ENCODE measurements at regions of chr20 and their contacts with region 1.

Region 1: DNA sequence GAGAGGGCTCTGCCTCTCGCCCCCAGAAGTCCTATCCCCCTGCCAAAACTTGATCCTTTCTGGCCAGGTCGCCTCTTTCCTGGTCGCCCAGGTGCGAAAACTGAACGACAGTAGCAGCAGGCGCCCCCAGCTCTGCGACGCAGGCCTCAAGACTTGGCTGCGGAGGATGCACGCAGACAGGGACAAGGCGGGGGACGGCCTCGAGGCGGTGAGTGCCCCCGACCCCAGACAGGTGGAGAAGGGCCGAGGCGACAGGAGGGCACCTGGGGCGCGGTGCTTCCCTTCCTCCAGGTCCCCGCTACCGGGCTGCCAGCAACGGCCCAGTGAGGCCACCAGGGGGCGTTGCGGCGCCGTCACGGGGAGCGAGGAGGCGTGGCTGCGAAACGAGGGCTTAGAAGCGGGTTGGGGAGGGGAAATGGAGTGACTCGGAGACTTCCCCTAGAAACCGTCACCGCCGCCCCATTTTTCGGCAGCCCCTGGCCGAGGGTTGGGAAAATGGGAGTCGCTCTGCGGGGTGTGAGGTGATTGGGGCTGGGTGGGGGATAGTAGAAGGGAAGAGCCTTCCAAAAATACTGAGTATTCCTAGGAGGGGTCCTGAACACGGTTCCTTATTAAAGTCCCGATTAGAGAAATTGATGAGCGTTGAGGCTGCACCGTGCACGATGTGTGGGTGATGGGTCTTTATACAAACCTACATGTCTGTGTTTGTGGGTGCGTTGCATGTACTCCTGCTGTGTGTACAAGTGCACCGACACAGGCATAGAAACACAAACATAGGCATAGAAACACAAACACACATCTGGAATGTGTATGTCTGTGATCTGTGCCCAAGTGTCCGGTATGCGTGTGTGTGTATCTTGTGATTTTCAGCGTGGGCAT is 44.6 kb downstream of the ARHGAP40 start:
- DNase-seq: peak; percentile 67 to 89 (median 71)
- ATAC-seq: peak in 3 of 4 donors; percentile 77 to 91 (median 86)
- H3K4me3 ChIP-seq: peak overlapping the region in 5 of 12 donors; percentile 5 to 28 (median 20)
- H3K27ac ChIP-seq: no peak overlapping the region
- H3K4me1 ChIP-seq: peaks cover 0 to 10% (median 3%) of the 10 kb centered on the region in 12 donors
- H3K27me3 ChIP-seq: peaks cover 8 to 75% (median 39%) of the 10 kb centered on the region in 9 donors
- CTCF ChIP-seq: peak; percentile 89 to 97 (median 93)
- POLR2A ChIP-seq: no peak

Region 2: GRCh38 chr20:38730989-38731737 is 84.9 kb after region 1 on chr20:
- intact Hi-C with region 1: loop called (anchors 2 to 5 kb)
- DNase-seq: peak; percentile 44 to 85 (median 63)
- ATAC-seq: peak; percentile 66 to 89 (median 79)
- H3K4me3 ChIP-seq: peak overlapping the region in 8 of 12 donors; percentile 19 to 46 (median 32)
- H3K27ac ChIP-seq: no peak overlapping the region
- H3K4me1 ChIP-seq: peaks cover 0 to 49% (median 16%) of the 10 kb centered on the region in 12 donors
- H3K27me3 ChIP-seq: peaks cover 66 to 100% (median 86%) of the 10 kb centered on the region in 9 donors
- CTCF ChIP-seq: peak; percentile 89 to 99 (median 96)
- POLR2A ChIP-seq: no peak

Region 3: DNA sequence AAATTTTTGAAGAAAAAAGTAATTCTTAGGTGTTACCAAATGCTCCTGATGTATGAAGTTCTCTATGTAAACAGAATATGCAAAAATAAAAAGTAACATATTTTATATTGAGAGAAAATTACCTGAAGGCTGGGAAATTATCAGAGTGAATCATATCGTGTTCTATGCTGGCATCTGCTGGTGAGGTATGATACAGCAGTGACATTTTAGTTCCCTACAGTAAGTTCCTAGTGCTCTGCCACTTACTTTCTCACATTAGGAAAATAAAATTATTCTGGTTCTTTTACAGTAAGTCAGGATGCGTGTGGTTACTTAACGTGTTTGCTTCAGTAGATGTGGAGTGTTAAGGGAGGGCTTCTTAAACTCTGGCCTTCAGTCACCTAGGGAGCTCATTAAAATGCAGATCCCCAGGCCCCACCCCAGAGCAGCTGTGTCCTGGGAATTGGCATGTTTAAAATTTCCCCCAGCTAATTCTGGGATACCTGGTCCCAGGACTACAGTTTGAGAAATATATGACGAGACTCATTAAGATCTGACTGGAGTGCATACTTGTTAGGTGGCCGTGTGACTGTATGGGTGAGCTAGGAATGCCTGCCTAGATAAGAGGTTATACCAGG is 105.2 kb after region 1 on chr20:
- intact Hi-C with region 1: loop called (anchors 1 to 5 kb)
- DNase-seq: no peak
- ATAC-seq: no peak
- H3K4me3 ChIP-seq: no peak overlapping the region
- H3K27ac ChIP-seq: no peak overlapping the region
- H3K4me1 ChIP-seq: peaks cover 4 to 17% (median 13%) of the 10 kb centered on the region in 12 donors
- H3K27me3 ChIP-seq: no peaks in the 10 kb centered on the region
- CTCF ChIP-seq: peak; percentile 32 to 74 (median 58)
- POLR2A ChIP-seq: no peak

Region 4: DNA sequence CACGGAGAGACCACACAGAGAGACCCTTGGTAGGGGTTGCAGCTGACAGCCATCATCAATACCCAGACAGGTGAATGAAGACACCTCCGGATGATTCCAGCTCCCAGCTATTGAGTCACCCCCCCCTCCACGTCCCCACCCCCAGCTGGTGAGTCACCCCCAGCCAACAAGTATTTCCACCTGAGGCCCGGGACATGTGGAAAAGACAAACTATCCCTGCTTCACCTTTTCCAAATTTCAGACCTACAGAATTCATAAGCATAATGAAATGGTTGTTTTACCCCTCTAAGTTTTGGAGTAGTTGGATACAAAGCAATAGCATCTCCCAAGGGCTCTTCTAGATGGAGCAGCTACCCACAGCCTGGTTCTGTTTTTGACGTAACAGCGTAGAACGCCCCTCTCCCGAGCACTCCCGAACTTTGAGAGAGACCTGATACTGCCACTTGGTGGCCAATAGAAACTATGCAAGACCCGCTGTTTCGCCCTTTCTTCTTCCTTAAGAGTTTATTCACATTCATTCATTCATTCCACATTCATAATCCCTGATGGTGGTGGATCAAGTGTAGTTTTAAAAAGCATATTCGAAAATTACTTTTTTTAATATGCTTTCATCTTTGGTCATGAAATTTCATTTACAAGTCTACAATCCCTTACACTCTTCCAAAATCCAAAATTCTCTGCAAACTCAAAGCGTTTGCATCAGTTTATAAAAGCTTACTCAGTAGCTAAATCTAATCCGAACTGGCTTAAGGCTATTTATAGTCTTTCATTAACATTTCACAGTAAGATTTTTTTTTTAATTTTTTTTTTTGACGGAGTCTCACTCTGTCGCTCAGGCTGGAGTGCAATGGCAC is 144.2 kb after region 1 on chr20:
- intact Hi-C with region 1: loop called in 3 of 10 experiments (anchors 1 to 5 kb)
- DNase-seq: no peak
- ATAC-seq: no peak
- H3K4me3 ChIP-seq: no peak overlapping the region
- H3K27ac ChIP-seq: no peak overlapping the region
- H3K4me1 ChIP-seq: no peaks in the 10 kb centered on the region
- H3K27me3 ChIP-seq: no peaks in the 10 kb centered on the region
- CTCF ChIP-seq: peak in 11 of 12 donors; percentile 34 to 78 (median 62)
- POLR2A ChIP-seq: no peak

Region 5: DNA sequence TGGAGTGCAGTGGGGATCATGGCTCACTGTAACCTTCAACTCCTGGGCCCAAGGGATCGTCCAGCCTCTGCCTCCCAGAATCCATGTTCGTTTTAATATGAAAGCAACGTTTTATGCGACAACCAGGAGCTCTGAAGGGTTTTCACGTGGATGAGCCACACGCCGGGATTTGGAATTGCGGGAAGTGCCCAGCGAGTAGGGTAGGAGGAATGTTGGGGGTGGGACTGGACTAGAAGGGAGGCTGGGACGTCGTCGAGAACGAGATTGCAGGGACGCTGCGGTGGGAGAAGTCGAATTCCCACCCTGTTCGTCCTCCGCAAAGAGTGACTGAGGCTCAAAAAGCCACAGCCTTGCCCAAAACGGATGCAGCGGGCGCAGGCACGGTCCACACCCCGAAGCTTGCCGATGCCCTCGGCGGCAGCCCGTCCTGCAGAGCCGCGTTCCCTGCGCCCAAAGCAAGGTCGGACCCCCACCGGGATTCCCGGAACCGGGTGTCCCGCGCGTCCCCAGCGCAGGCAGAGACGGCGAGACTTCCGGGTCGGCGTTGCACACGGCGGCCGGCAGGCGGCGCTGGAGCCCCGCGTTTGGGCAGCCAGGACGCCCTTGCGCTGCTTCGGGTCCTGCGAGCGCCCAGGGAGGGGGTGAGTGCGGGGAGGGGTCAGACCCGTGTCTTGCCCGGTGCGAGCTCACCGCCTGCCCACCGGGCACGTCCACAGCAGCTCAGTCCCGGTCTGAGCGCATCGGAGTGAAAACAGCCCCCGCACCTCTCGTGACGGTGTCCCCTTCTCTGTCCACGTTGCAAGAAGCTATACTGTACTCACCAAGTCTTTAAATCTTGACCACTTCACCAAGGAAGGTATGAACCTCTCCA is 403.7 kb after region 1 on chr20:
- intact Hi-C with region 1: loop called in 9 of 10 experiments (anchors 2 to 10 kb)
- DNase-seq: peak; percentile 71 to 89 (median 78)
- ATAC-seq: peak; percentile 44 to 89 (median 85)
- H3K4me3 ChIP-seq: peak overlapping the region; percentile 44 to 85 (median 69)
- H3K27ac ChIP-seq: peak overlapping the region in 7 of 12 donors; percentile 1 to 61 (median 43)
- H3K4me1 ChIP-seq: peaks cover 0 to 13% (median 5%) of the 10 kb centered on the region in 12 donors
- H3K27me3 ChIP-seq: peaks cover 0 to 4% (median 0%) of the 10 kb centered on the region in 9 donors
- CTCF ChIP-seq: peak; percentile 96 to 99 (median 98)
- POLR2A ChIP-seq: no peak

Measured in heart left ventricle (tissue), 16 donors.